MCF 10A (cell line): ENCODE measurements at regions of chr5 and their contacts with region 1.

Region 1: DNA sequence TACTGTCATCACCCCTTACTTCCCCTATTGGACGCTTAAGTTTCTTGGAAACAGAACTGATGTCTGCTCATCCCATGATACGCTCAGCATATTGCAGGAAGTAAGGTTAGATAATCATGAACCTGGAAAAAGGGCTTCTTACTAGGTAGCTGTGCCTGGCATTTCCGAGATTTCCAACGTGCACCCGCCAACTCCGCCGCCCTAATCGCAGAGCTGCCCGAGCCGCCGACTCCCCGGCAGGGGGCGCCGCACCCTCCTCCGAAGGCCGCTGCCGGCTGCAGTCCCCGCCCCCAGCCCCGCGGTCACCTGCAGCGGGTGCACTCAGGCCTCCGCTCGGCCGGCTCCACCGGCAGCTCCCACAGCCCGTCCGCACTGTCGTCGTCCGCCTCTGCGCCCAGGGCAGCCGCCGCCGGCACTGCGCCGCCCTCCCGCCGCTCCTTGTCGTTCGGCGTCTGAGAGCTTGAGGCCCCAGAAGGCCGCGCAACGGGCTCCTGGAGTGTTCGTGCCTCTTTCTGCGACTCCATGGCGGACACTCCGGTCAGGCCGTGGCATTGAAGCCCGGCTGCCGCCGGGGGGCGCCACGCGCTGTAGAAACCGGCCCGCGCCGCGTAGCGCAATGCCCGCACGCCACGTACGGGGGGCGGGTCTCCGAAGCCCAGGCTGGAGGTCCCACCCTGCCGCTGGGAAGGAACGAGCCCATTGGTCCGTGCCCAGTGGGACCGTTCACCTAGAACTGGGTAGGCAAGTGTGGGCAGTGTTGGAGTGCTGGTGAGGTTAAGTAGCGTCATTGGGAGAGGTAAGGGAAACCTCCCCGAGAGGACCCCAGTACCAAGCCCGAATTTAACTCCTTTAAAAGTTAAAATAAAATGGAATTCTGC is at the start of gene DTWD2:
- DNase-seq: peak; percentile 96
- H3K4me3 Mint-ChIP-seq: peak within 1 kb of the TSS; percentile 82
- H3K27ac Mint-ChIP-seq: peak within 1 kb of the TSS; percentile 73
- H3K4me1 Mint-ChIP-seq: peaks cover 34% of the 10 kb centered on the region
- H3K27me3 Mint-ChIP-seq: no peaks in the 10 kb centered on the region
- CTCF ChIP-seq: peak; percentile 86
- total RNA-seq, gene DTWD2: 10.1 and 10.5 TPM in 2 replicates

Region 2: GRCh38 chr5:118687661-118688621 is 300.3 kb before region 1 on chr5:
- CTCF ChIA-PET with region 1: no interaction called
- POLR2A ChIA-PET with region 1: no interaction called
- intact Hi-C with region 1: no loop called
- DNase-seq: no peak
- H3K4me3 Mint-ChIP-seq: no peak overlapping the region
- H3K27ac Mint-ChIP-seq: no peak overlapping the region
- H3K4me1 Mint-ChIP-seq: no peaks in the 10 kb centered on the region
- H3K27me3 Mint-ChIP-seq: no peaks in the 10 kb centered on the region
- CTCF ChIP-seq: no peak

Region 3: DNA sequence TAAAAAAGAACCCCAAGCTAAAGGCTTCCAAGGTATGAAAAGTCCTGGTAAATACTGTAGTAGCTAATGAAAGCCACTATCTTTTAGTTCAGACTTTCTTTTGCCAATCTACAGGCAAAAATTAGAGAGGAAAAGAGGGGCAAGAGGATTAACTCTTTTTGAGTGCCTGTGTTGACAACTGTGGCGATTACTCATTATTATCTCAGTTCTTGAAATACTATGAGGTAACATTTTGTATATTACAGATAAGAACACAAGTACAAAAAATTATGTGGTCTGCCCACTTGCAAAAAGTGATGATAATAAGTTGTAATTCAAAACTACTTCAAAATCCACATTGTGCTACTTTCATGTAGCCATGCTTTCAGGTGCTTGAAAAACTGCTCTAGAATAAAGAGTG is 143.9 kb before region 1 on chr5:
- CTCF ChIA-PET with region 1: no interaction called
- POLR2A ChIA-PET with region 1: no interaction called
- intact Hi-C with region 1: no loop called
- DNase-seq: no peak
- H3K4me3 Mint-ChIP-seq: no peak overlapping the region
- H3K27ac Mint-ChIP-seq: no peak overlapping the region
- H3K4me1 Mint-ChIP-seq: no peaks in the 10 kb centered on the region
- H3K27me3 Mint-ChIP-seq: no peaks in the 10 kb centered on the region
- CTCF ChIP-seq: no peak

Region 4: DNA sequence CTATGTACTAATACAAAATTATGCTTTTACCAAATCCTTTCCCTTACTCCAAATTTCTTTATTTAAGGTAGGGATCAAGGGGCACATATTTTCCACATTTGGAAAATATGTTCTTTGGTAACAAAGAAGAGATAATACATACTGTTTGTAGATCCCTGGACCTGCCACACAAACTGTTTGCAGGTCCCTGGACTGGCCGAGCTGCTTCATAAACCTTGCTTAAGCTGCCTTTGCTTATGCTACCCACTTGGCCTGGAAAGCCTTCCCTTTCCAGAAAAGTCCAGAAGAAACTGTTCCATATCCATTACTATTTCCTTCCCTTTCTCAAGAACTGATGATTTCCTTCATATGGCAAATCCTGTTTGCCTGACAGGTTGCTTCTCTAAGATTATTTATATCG is 60.0 kb after region 1 on chr5:
- CTCF ChIA-PET with region 1: interaction called, 10 read pairs
- POLR2A ChIA-PET with region 1: no interaction called
- intact Hi-C with region 1: no loop called
- DNase-seq: no peak
- H3K4me3 Mint-ChIP-seq: no peak overlapping the region
- H3K27ac Mint-ChIP-seq: no peak overlapping the region
- H3K4me1 Mint-ChIP-seq: peaks cover 6% of the 10 kb centered on the region
- H3K27me3 Mint-ChIP-seq: no peaks in the 10 kb centered on the region
- CTCF ChIP-seq: no peak

Region 5: GRCh38 chr5:119274767-119275130 is 286.5 kb after region 1 on chr5:
- CTCF ChIA-PET with region 1: interaction called, 10 read pairs
- POLR2A ChIA-PET with region 1: interaction called, 3 read pairs
- intact Hi-C with region 1: loop called (anchors 5 kb)
- DNase-seq: peak; percentile 80
- H3K4me3 Mint-ChIP-seq: no peak overlapping the region
- H3K27ac Mint-ChIP-seq: peak overlapping the region; percentile 80
- H3K4me1 Mint-ChIP-seq: peaks cover 35% of the 10 kb centered on the region
- H3K27me3 Mint-ChIP-seq: no peaks in the 10 kb centered on the region
- CTCF ChIP-seq: no peak

Region 6: DNA sequence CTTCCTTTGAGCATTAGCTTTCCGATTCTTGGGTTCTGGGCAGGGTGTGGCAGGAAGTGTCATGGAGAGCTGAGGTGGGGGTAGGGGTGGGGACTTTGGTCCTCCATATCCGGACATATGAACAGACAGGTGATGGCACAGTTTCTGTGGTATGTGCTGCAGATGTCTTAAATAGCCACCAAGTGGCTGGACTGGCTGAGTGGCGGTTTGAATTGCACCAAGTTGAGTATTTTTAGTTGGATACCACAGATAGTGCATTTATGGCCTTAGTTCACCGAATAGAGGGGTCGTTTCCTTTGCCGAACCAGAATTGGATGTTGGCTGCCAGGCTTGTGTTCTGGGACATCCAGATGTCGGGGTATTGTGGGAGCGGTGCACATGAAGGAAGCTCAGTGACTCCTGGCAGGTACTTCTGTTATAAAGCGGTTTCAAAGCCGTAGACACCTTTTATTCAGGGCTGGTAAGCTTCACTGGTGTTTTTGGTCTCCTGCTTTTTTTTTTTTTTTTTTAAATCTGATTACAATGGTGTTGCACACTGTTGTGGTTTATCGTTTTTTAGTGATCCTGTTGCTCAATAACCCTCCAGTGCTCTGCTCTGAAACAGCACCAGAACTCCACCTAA is 352.5 kb after region 1 on chr5:
- CTCF ChIA-PET with region 1: interaction called, 14 read pairs
- POLR2A ChIA-PET with region 1: interaction called, 18 read pairs
- intact Hi-C with region 1: loop called (anchors 1 kb)
- DNase-seq: no peak
- H3K4me3 Mint-ChIP-seq: no peak overlapping the region
- H3K27ac Mint-ChIP-seq: no peak overlapping the region
- H3K4me1 Mint-ChIP-seq: peaks cover 24% of the 10 kb centered on the region
- H3K27me3 Mint-ChIP-seq: no peaks in the 10 kb centered on the region
- CTCF ChIP-seq: no peak

Region 7: DNA sequence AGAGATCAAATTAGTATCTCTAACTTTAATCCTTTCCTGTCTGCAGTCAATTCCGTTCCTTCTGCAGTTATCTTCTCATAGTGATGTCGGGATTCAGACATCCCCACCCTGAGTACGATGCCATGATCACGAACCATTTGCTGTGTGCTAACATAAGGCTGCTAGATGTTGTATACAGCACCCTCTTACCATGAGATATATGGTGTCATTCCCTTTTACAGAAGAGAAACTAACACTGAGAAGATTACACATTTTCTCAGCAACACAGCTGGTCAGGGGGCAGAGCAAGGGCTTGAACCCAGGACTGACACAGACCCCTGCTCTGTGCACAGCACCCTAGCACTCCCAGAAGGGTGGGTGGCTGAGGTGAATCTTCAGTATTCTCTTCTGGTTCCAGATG is 417.2 kb after region 1 on chr5:
- CTCF ChIA-PET with region 1: interaction called, 49 read pairs
- POLR2A ChIA-PET with region 1: interaction called, 3 read pairs
- intact Hi-C with region 1: no loop called
- DNase-seq: no peak
- H3K4me3 Mint-ChIP-seq: no peak overlapping the region
- H3K27ac Mint-ChIP-seq: no peak overlapping the region
- H3K4me1 Mint-ChIP-seq: no peaks in the 10 kb centered on the region
- H3K27me3 Mint-ChIP-seq: no peaks in the 10 kb centered on the region
- CTCF ChIP-seq: no peak